ENCODE measurements at regions of chr17 and their contacts with region 1.

Region 1: GRCh38 chr17:64281962-64282727 is 19.1 kb upstream of the TEX2 start:
- DNase-seq: peak; percentile 26 to 56
- ATAC-seq: peak; percentile 19 to 57 (median 42)
- H3K4me3 ChIP-seq: peak overlapping the region in 3 of 10 donors; percentile 0 to 1 (median 1)
- H3K27ac ChIP-seq: peak overlapping the region in 1 of 10 donors; percentile 22
- H3K4me1 ChIP-seq: peaks cover 3 to 39% (median 28%) of the 10 kb centered on the region in 9 donors
- H3K27me3 ChIP-seq: no peaks in the 10 kb centered on the region
- CTCF ChIP-seq: peak; percentile 75 to 89 (median 82)

Region 2: DNA sequence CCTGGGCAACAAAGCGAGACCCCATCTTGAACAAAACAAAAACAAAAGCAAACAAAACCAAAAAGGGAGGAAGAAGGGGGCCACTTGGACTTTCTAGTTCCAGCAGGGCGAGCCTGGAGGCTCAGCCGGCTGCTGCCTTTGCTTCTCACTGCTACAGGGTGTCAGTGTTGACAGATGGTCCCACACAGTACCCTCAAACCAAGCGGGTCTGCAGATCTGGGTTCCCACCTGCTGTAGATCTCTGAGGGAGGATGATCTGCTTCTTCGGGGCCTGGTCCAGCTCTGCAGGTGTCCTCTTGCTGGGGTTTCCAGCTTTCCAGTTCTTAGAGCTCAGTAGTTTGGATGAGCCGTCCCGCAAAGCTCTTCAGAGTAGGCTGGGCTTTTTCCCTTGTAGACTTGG is 377.8 kb before region 1 on chr17:
- intact Hi-C with region 1: loop called in 1 of 10 experiments (anchors 10 kb)
- DNase-seq: no peak
- ATAC-seq: no peak
- H3K4me3 ChIP-seq: no peak overlapping the region
- H3K27ac ChIP-seq: no peak overlapping the region
- H3K4me1 ChIP-seq: no peaks in the 10 kb centered on the region
- H3K27me3 ChIP-seq: peaks cover 0 to 2% (median 0%) of the 10 kb centered on the region in 7 donors
- CTCF ChIP-seq: no peak

Region 3: GRCh38 chr17:63919311-63919723 is 362.8 kb before region 1 on chr17:
- intact Hi-C with region 1: loop called in 2 of 10 experiments (anchors 10 kb)
- DNase-seq: peak in 1 of 2 donors; percentile 51
- ATAC-seq: peak; percentile 81 to 91 (median 87)
- H3K4me3 ChIP-seq: no peak overlapping the region
- H3K27ac ChIP-seq: no peak overlapping the region
- H3K4me1 ChIP-seq: peaks cover 0 to 10% (median 0%) of the 10 kb centered on the region in 9 donors
- H3K27me3 ChIP-seq: peaks cover 0 to 6% (median 0%) of the 10 kb centered on the region in 7 donors
- CTCF ChIP-seq: peak; percentile 88 to 97 (median 92)

Region 4: GRCh38 chr17:64025732-64026294 is 256.3 kb before region 1 on chr17:
- intact Hi-C with region 1: loop called in 7 of 10 experiments (anchors 2 to 10 kb)
- DNase-seq: peak; percentile 80 to 81
- ATAC-seq: peak in 7 of 8 donors; percentile 69 to 85 (median 82)
- H3K4me3 ChIP-seq: peak overlapping the region in 5 of 10 donors; percentile 14 to 32 (median 26)
- H3K27ac ChIP-seq: peak overlapping the region in 7 of 10 donors; percentile 4 to 97 (median 66)
- H3K4me1 ChIP-seq: peaks cover 4 to 31% (median 20%) of the 10 kb centered on the region in 9 donors
- H3K27me3 ChIP-seq: no peaks in the 10 kb centered on the region
- CTCF ChIP-seq: peak; percentile 88 to 97 (median 95)

Region 5: GRCh38 chr17:64032081-64032480 is 250.1 kb before region 1 on chr17:
- intact Hi-C with region 1: loop called in 7 of 10 experiments (anchors 2 to 10 kb)
- DNase-seq: no peak
- ATAC-seq: no peak
- H3K4me3 ChIP-seq: no peak overlapping the region
- H3K27ac ChIP-seq: no peak overlapping the region
- H3K4me1 ChIP-seq: peaks cover 0 to 6% (median 0%) of the 10 kb centered on the region in 9 donors
- H3K27me3 ChIP-seq: no peaks in the 10 kb centered on the region
- CTCF ChIP-seq: no peak

Region 6: GRCh38 chr17:64145757-64146417 is 136.3 kb before region 1 on chr17:
- intact Hi-C with region 1: loop called (anchors 2 to 5 kb)
- DNase-seq: peak; percentile 94 to 98
- ATAC-seq: peak; percentile 95 to 97 (median 96)
- H3K4me3 ChIP-seq: peak overlapping the region; percentile 64 to 94 (median 76)
- H3K27ac ChIP-seq: peak overlapping the region; percentile 85 to 99 (median 96)
- H3K4me1 ChIP-seq: peaks cover 6 to 45% (median 38%) of the 10 kb centered on the region in 9 donors
- H3K27me3 ChIP-seq: no peaks in the 10 kb centered on the region
- CTCF ChIP-seq: peak in 2 of 9 donors; percentile 9 to 28

Region 7: DNA sequence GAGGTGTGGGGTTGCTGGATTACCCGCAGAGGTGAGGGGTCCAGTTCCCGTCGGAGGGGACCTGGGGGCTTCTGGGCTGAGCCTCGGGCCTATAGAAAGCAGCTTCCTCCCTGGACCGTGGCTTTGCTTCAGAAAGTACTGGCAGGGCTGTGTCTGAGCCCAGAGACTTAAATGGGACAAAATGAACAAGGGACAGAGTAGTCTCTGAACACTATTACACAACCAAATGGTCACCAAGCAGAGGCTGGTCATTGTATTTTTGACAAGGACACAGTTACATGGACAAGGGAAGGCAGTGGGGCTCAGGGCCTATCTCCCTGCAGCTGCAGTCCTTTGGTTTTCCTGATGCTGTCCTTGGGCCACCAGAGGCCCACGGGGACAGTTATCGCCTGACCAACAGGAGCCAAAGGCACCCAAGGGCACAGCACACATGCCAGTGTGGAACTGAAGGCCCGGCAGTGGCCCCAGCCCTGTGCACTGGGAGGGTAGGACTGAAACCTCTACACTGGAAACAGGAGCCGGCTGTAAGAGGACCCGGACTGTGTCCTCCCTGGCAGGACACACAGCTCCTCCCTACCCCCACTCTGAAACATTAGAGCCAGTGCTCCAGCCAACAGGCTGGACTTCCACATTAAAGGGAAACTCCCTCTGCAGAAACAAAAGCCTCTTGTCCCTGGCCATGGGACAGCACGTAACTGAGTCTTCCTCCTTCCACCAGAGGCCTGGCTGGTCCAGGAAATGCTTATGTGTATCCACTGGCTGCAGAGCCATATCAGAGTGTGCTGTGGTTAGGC is 126.2 kb before region 1 on chr17:
- intact Hi-C with region 1: loop called in 3 of 10 experiments (anchors 2 to 5 kb)
- DNase-seq: peak; percentile 73 to 85
- ATAC-seq: peak; percentile 87 to 95 (median 90)
- H3K4me3 ChIP-seq: peak overlapping the region in 1 of 10 donors; percentile 2
- H3K27ac ChIP-seq: peak overlapping the region; percentile 86 to 96 (median 92)
- H3K4me1 ChIP-seq: peaks cover 39 to 88% (median 82%) of the 10 kb centered on the region in 9 donors
- H3K27me3 ChIP-seq: no peaks in the 10 kb centered on the region
- CTCF ChIP-seq: peak in 3 of 9 donors; percentile 24 to 37 (median 26)

Measured in heart right ventricle (tissue), 16 donors.